Activated CD8-positive, alpha-beta T cell treated with anti-CD3 and anti-CD28 coated beads, Interleukin-2, amount 10 ng/mL, durations not matched to agents 7 days and 5 days (primary cell): ENCODE measurements at regions of chr15 and their contacts with region 1.

Region 1: GRCh38 chr15:75107908-75108838 is 84.8 kb downstream of the PPCDC start:
- DNase-seq: peak; percentile 85
- ATAC-seq: peak; percentile 80
- H3K4me3 Mint-ChIP-seq: peak overlapping the region; percentile 27
- H3K27ac Mint-ChIP-seq: peak overlapping the region; percentile 89
- H3K4me1 Mint-ChIP-seq: peaks cover 57% of the 10 kb centered on the region
- H3K27me3 Mint-ChIP-seq: peaks cover 11% of the 10 kb centered on the region

Region 2: DNA sequence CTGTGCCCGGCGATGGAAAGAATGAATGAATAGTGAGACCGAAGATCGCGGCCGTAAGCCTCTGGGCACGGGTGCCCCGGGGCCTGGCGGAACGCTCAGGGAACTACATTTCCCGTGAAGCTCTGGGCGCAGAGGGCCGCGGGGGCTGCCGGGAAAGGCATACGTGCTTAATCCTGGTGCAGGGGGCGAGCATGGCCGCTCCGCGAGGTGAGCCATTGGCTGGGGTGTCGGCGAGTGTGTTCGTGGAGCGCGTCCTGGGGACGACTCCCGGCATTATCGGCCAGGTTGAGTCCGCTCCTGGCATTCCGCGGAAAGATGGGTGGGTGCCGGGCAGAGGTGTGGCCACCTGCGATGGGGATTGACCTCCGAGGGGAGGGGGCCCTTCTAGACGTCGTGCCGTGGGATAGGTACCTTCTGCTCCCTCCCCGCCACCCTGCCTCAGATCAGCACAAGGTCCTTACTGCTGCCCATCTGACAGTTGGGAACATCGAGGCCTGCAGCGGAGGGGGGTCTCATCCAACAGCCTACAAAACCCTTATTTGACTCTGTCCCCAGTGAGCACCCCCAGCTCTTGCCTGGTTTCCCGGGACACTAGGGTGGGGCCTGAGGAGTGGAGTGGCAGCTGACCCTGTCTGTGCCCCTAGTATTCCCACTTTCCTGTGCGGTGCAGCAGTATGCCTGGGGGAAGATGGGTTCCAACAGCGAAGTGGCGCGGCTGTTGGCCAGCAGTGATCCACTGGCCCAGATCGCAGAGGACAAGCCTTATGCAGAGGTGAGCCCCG is 218.1 kb before region 1 on chr15 and contains the start of gene MPI:
- CTCF ChIA-PET with region 1: no interaction called
- POLR2A ChIA-PET with region 1: no interaction called
- DNase-seq: peak; percentile 90
- ATAC-seq: peak; percentile 97
- H3K4me3 Mint-ChIP-seq: peak within 1 kb of the TSS; percentile 91
- H3K27ac Mint-ChIP-seq: peak within 1 kb of the TSS; percentile 89
- H3K4me1 Mint-ChIP-seq: peaks cover 50% of the 10 kb centered on the region
- H3K27me3 Mint-ChIP-seq: no peaks in the 10 kb centered on the region
- total RNA-seq, gene MPI: 55.7 to 56.7 TPM

Region 3: DNA sequence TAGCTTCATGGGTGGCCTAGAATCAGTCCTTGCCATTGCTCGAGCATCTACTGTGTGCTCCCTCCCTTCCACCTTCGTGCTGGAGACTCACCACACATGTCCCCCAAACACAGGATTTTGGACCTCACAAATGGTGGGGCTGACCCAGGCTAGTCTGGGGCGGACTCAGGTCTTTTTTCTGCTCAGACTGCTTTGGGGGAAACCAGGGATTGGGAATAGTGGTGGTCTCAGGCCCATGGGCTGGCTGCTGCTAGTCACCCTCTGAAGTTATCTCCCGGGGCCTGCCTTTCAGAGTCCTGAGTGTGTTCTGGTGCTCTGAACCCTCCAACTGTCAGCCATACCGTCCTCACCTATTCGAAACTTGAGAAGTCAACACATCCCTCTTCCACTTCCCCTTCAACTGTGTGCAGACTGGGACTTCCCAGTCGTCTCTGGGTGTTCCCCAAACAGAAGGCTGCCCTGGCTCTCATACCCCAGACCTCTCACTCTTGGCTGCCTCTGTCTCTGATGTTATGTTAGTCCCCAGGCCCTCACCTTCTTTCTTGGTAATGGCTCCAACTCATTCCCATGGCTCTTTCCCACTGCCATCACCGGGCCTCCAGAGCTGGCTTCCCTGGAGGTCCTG is 38.8 kb before region 1 on chr15:
- CTCF ChIA-PET with region 1: interaction called, 15 read pairs
- POLR2A ChIA-PET with region 1: interaction called, 8 read pairs
- DNase-seq: no peak
- ATAC-seq: no peak
- H3K4me3 Mint-ChIP-seq: no peak overlapping the region
- H3K27ac Mint-ChIP-seq: peak overlapping the region; percentile 37
- H3K4me1 Mint-ChIP-seq: peaks cover 56% of the 10 kb centered on the region
- H3K27me3 Mint-ChIP-seq: no peaks in the 10 kb centered on the region

Region 4: GRCh38 chr15:75130597-75131268 is 22.6 kb after region 1 on chr15:
- CTCF ChIA-PET with region 1: interaction called, 22 read pairs
- POLR2A ChIA-PET with region 1: interaction called, 8 read pairs
- DNase-seq: peak; percentile 62
- ATAC-seq: peak; percentile 97
- H3K4me3 Mint-ChIP-seq: peak overlapping the region; percentile 74
- H3K27ac Mint-ChIP-seq: peak overlapping the region; percentile 88
- H3K4me1 Mint-ChIP-seq: peaks cover 44% of the 10 kb centered on the region
- H3K27me3 Mint-ChIP-seq: peaks cover 2% of the 10 kb centered on the region